Esophagus muscularis mucosa (tissue), 4 donors: ENCODE measurements at regions of chr10 and their contacts with region 1.

Region 1: DNA sequence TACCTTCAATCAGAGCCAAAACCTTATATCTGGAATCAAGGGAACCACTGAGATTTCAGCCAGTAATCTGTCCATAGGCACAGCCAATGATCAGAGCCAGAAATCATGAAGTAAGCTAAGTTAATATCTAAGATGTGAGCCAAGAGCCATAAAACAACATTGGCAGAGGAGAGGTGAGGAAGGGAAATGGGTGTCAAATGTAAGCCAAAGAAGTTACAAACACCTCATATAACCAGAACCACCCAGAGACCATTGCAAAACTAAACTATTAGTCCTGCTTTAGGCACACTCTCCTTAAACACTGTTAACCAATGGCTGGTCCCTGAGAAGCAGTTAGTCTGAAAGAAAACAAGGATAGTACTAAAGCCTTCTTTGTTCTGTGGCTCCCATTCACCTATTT is 173.1 kb downstream of the HPSE2 start:
- DNase-seq: no peak
- H3K4me3 ChIP-seq: no peak overlapping the region
- H3K27ac ChIP-seq: peak overlapping the region in 1 of 4 donors; percentile 46
- H3K4me1 ChIP-seq: peaks cover 0 to 21% (median 17%) of the 10 kb centered on the region in 4 donors
- H3K27me3 ChIP-seq: no peaks in the 10 kb centered on the region
- CTCF ChIP-seq: no peak
- EP300 ChIP-seq: no peak
- POLR2A ChIP-seq: no peak

Region 2: GRCh38 chr10:99234791-99235657 is 172.4 kb after region 1 on chr10:
- intact Hi-C with region 1: loop called (anchors 5 kb)
- DNase-seq: no peak
- H3K4me3 ChIP-seq: peak overlapping the region; percentile 60 to 68 (median 62)
- H3K27ac ChIP-seq: peak overlapping the region; percentile 88 to 91 (median 90)
- H3K4me1 ChIP-seq: peaks cover 30 to 68% (median 44%) of the 10 kb centered on the region in 4 donors
- H3K27me3 ChIP-seq: peaks cover 0 to 21% (median 0%) of the 10 kb centered on the region in 4 donors
- CTCF ChIP-seq: no peak
- EP300 ChIP-seq: no peak
- POLR2A ChIP-seq: no peak